PC-9 (cell line): ENCODE measurements at regions of chr11 and their contacts with region 1.

Region 1: DNA sequence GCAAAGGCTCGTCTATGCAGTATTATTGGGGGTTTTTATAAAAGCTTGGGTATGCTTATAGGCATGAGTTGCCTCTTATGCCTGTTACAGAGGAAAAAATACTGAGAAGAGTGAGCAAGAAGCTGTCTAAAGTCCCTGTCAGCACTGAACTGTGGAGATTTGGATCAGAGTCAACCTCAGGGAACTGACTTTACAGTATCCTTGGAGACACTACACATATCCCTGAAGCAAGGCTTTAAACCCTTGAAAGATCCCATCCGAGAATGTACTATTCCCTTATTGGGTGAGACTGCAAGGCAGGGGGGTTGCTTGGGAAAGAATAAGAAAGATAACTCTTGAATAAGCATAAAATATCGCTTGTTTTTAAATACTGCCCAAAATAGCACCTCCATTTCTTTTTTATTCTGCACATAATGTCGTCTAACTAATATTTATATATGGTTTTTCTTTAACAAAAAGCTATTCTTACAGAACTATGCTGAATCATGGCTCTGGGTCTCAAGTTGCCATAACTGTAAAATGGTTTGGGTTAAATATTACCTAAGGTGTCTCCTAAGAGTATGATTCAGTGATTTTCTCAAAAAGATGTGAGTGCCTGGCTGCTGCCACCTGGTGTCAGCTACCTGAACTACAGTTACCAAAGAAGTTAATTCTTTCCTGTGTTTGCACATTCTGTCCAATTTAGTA is 1062.8 kb downstream of the DLG2 start:
- DNase-seq: peak in 1 of 2 experiments; percentile 15
- H3K4me3 ChIP-seq: no peak overlapping the region
- H3K27ac ChIP-seq: no peak overlapping the region
- H3K4me1 ChIP-seq: no peaks in the 10 kb centered on the region
- H3K27me3 ChIP-seq: no peaks in the 10 kb centered on the region
- CTCF ChIP-seq: peak; percentile 94

Region 2: GRCh38 chr11:84313830-84314359 is 250.4 kb before region 1 on chr11:
- CTCF ChIA-PET with region 1: no interaction called
- POLR2A ChIA-PET with region 1: no interaction called
- intact Hi-C with region 1: no loop called
- DNase-seq: no peak
- H3K4me3 ChIP-seq: no peak overlapping the region
- H3K27ac ChIP-seq: no peak overlapping the region
- H3K4me1 ChIP-seq: no peaks in the 10 kb centered on the region
- H3K27me3 ChIP-seq: 0 out of 2 replicates have a peak, but pooled peaks cover 7% of the 10 kb centered on the region
- CTCF ChIP-seq: no peak

Region 3: GRCh38 chr11:84398017-84398626 is 166.2 kb before region 1 on chr11:
- CTCF ChIA-PET with region 1: no interaction called
- POLR2A ChIA-PET with region 1: no interaction called
- intact Hi-C with region 1: loop called (anchors 1 kb)
- DNase-seq: no peak
- H3K4me3 ChIP-seq: no peak overlapping the region
- H3K27ac ChIP-seq: no peak overlapping the region
- H3K4me1 ChIP-seq: no peaks in the 10 kb centered on the region
- H3K27me3 ChIP-seq: no peaks in the 10 kb centered on the region
- CTCF ChIP-seq: peak; percentile 54